GM13977 (cell line): ENCODE measurements at regions of chr1 and their contacts with region 1.

Region 1: GRCh38 chr1:41573785-41574713 is 89.6 kb upstream of the EDN2 start:
- DNase-seq: peak; percentile 87
- CTCF ChIP-seq: peak; percentile 91

Region 2: DNA sequence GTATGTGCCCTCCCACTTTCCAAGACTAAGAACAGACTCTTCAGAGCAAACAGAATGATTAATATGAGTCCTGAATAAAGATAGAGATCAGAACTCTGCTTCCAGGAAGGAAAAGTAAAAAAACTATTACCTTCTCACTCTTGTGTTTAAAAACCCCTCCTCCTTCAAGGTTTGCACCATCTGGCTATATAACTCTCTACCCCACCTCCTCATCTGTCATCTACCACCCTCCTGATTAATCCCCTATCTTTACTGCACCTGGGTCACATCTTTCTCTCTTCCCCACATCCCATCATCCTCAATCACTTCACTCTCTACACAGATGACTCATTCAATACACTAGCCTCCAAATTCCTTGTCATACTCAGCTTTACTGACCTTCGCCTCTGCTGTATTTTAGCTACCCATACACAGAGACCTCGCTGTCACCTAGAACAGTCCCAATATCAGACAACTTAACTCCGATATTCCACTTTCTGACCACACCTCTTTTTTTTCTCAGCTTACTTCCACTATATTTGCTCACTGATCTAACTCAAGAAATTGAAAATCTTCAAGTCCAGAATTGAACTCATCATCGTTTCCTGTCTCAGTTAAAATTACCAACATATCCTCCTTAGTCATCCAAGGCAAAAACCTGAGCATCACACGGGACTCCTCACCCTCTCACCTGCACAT is 335.6 kb before region 1 on chr1:
- in situ Hi-C with region 1: no loop called
- DNase-seq: no peak
- CTCF ChIP-seq: no peak

Region 3: DNA sequence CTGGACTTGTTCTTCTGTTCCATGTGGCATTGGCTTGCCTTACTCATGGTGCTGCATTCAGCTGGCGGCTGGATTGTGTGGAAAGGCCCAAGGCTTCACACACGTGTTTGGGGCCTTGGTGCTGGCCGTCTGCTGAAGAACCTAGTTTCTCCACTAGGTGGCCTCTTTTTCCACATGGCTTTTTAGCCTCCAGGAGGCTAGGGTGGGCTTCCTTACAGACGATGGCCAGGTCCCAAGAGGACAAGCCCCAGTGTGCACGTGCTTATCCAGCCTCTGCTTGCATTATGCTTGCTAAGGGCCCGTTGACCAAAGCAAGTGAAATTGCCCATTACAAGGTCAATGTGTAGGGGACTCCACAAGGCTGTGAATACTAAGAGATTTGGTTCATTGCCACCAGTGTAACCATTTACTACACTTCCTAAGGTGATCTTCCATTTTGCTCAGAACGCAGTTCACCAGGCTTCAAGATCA is 260.4 kb before region 1 on chr1:
- in situ Hi-C with region 1: no loop called
- DNase-seq: peak; percentile 55
- CTCF ChIP-seq: peak; percentile 67

Region 4: GRCh38 chr1:41461790-41462611 is 112.0 kb before region 1 on chr1:
- in situ Hi-C with region 1: no loop called
- DNase-seq: no peak
- CTCF ChIP-seq: no peak

Region 5: DNA sequence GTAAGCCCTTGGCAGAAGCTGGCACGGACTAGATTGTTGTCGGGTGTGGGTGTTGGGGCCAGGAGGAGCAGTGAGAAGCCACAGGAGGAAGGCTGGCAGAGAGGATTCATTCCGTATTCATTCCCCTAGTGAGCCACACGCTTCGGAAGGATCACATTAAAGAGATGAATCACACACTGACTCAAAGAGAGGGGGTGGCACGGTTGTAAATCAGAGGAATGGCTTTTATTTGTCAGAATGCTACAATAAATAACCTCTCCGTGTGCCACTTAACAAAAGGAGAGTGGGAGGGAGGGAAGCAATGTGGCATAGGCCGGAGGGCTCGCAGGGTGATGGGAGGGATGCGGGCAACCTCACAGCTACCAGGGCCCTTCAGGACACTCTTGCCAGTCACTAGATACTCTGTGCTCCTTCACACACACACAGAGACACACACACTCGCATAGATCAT is 209.2 kb after region 1 on chr1:
- in situ Hi-C with region 1: loop called (anchors 10 kb)
- DNase-seq: no peak
- CTCF ChIP-seq: no peak

Region 6: DNA sequence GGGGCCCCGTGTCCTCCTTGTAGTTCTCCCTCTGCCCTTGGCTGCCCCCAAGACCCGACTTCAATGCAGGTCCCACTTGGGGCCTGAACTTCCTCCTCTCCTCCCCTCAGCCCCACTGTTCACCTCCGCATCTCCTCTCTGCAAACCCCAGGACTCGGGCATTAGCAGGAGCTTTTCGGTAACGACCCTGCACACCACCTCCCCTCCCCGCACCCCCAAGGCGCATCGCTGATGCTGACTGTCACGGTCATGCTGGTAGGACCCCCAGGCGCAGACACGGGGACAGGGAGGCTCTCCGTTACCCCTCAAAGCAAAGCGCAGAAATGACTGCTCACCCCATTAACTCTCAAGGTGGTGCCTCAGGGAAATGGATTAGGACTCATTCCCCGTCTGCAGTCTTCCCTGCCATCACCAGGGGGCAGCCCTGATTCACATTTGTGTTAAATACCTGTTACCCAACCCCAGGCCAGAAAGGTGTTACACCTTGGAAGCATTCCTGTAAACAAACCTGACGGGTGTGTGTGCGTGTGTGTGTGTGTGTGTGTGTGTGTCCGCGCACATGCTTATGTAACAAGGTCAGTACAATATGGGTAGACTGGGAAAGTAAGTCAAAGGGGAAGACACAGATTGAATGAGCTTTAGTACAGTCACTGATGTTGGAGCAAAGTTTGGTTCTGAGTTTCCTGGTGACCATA is 572.7 kb after region 1 on chr1:
- in situ Hi-C with region 1: loop called (anchors 25 kb)
- DNase-seq: peak; percentile 85
- CTCF ChIP-seq: peak; percentile 91